CD4-positive, alpha-beta memory T cell (primary cell): ENCODE measurements at regions of chr1 and their contacts with region 1.

Region 1: DNA sequence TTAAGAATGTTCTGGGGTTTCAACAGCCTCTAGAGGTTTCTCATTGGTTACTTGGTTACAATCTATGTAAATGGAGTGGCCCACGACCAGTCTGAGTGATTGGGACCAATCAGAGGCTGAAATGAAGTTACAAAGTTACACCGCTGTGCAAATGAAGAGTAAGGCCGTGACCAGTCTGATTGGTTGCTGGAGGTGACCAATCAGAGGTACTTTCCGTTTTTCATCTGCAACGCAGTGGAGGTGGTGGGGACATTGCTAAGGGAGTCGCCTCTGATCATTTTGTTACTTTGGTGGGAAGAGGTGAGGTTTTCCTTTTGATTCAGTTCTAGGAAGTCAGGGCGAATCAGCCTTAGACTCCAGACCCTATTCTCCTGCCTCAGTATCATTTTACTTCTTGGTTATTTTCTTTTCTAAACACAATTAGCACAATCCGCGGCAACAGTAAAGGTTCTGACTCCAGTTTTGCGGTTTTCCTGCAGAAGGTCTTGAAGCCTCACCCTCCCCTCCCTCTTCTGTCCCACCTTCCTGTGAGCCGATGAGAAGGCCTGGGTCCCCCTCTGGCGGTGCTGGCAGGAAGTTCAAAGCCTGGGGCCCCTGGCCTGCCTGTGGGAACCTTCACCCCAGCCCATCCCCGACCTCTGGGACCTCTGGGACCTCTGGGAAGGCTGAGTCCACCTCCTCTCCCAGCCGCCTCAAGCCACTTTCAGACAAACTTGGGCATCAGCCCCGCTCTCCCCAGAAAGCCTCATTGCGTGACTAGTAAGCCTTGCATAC is 38.7 kb upstream of the TTC34 start:
- DNase-seq: peak; percentile 66 to 78 (median 74)
- H3K4me3 ChIP-seq: no peak overlapping the region
- H3K4me3 Mint-ChIP-seq: peak overlapping the region; percentile 72 to 85 (median 81)
- H3K27ac ChIP-seq: peak overlapping the region; percentile 18
- H3K27ac Mint-ChIP-seq: peak overlapping the region; percentile 81 to 94 (median 85)
- H3K4me1 ChIP-seq: peaks cover 19% of the 10 kb centered on the region
- H3K4me1 Mint-ChIP-seq: peaks cover 17 to 23% (median 20%) of the 10 kb centered on the region in 4 donors
- H3K27me3 ChIP-seq: no peaks in the 10 kb centered on the region
- H3K27me3 Mint-ChIP-seq: peaks cover 0 to 3% of the 10 kb centered on the region in 2 donors

Region 2: GRCh38 chr1:2642560-2643413 is 197.4 kb before region 1 on chr1:
- CTCF ChIA-PET with region 1: no interaction called
- POLR2A ChIA-PET with region 1: no interaction called
- intact Hi-C with region 1: loop called (anchors 1 kb)
- DNase-seq: peak; percentile 95 to 96 (median 95)
- H3K4me3 ChIP-seq: peak overlapping the region; percentile 69 to 83
- H3K4me3 Mint-ChIP-seq: peak overlapping the region; percentile 85 to 94 (median 88)
- H3K27ac ChIP-seq: peak overlapping the region; percentile 99
- H3K27ac Mint-ChIP-seq: peak overlapping the region; percentile 85 to 99 (median 96)
- H3K4me1 ChIP-seq: peaks cover 16% of the 10 kb centered on the region
- H3K4me1 Mint-ChIP-seq: peaks cover 2 to 21% (median 10%) of the 10 kb centered on the region in 4 donors
- H3K27me3 ChIP-seq: no peaks in the 10 kb centered on the region
- H3K27me3 Mint-ChIP-seq: no peaks in the 10 kb centered on the region

Region 3: DNA sequence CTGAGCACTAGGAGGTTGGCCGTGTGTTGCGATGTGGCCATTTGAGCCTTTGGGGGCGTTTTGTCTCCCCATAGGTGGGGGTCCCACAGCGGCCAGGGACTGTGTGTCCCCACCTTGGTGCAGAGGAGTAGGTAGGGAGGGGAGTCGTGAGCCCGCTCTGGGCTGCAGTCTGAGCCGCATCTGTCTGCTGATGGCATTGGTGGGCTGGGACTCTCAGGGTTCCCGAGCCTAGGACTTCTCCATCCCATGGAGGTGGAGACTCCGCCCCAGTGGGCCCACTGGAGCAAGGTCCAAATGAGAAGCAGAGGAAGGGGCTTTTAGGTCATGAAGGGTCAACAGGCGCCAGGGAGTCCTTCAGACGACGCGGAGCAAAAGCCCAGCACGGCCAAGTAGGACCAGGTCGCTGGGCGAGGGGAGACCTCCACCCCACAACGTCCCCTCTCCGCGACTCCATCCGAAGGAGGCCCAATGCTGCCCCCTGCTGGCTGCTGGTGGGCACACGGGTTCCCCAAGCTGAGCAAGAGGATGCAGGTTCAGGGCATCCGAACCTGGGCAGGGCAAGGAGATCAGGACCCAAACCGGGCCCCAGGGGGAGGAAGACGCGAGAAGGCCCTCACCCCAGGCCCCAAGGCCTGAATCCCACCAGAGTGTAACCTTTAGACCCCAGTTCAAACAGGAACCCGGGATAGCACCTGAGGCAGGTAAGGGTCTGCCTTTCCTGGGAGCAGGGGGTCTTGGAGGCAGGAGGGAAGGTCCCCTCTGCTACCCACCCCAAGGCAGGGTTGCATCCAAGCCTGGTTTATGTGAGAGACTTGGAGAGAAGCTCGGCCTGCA is 53.7 kb before region 1 on chr1:
- CTCF ChIA-PET with region 1: no interaction called
- POLR2A ChIA-PET with region 1: no interaction called
- intact Hi-C with region 1: loop called (anchors 1 kb)
- DNase-seq: peak; percentile 52 to 66 (median 61)
- H3K4me3 ChIP-seq: no peak overlapping the region
- H3K4me3 Mint-ChIP-seq: no peak overlapping the region
- H3K27ac ChIP-seq: no peak overlapping the region
- H3K27ac Mint-ChIP-seq: no peak overlapping the region
- H3K4me1 ChIP-seq: no peaks in the 10 kb centered on the region
- H3K4me1 Mint-ChIP-seq: peaks cover 0 to 9% (median 3%) of the 10 kb centered on the region in 4 donors
- H3K27me3 ChIP-seq: peaks cover 5% of the 10 kb centered on the region
- H3K27me3 Mint-ChIP-seq: peaks cover 26 to 28% of the 10 kb centered on the region in 2 donors

Region 4: GRCh38 chr1:2821966-2822620 is 18.1 kb before region 1 on chr1:
- CTCF ChIA-PET with region 1: interaction called, 7 read pairs
- POLR2A ChIA-PET with region 1: no interaction called
- intact Hi-C with region 1: loop called (anchors 1 kb)
- DNase-seq: peak in 4 of 5 donors; percentile 24 to 38 (median 31)
- H3K4me3 ChIP-seq: no peak overlapping the region
- H3K4me3 Mint-ChIP-seq: no peak overlapping the region
- H3K27ac ChIP-seq: no peak overlapping the region
- H3K27ac Mint-ChIP-seq: no peak overlapping the region
- H3K4me1 ChIP-seq: no peaks in the 10 kb centered on the region
- H3K4me1 Mint-ChIP-seq: no peaks in the 10 kb centered on the region
- H3K27me3 ChIP-seq: no peaks in the 10 kb centered on the region
- H3K27me3 Mint-ChIP-seq: peaks cover 1 to 11% of the 10 kb centered on the region in 2 donors